Dorsolateral prefrontal cortex (tissue), 120 donors: ENCODE measurements at regions of chr20 and their contacts with region 1.

Region 1: GRCh38 chr20:25146374-25146773 is 49.1 kb upstream of the ENTPD6 start:
- DNase-seq: no peak
- H3K4me3 ChIP-seq: no peak overlapping the region
- H3K27ac ChIP-seq: no peak overlapping the region
- H3K27me3 ChIP-seq: peaks cover 0 to 21% (median 0%) of the 10 kb centered on the region in 45 donors
- CTCF ChIP-seq: no peak

Region 2: DNA sequence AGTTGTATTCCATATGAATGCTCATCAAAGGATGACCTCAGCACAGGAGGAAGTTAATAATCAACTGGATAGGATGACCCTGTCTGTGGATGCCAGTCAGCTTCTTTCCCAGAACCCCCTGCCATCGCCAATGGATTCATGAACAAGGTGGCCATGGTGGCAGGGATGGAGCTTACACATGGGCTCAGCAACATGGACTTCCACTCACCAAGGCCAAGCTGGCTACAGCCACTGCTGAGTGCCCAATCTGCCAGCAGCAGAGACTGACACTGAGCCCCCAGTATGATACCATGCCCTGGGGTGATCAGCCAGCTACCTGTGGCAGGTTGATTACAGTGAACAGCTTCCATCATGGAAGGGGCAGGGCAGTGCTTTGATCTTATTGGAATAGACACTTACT is 19.7 kb before region 1 on chr20:
- intact Hi-C with region 1: loop called in 1 of 2 experiments (anchors 2 kb)
- DNase-seq: no peak
- H3K4me3 ChIP-seq: no peak overlapping the region
- H3K27ac ChIP-seq: no peak overlapping the region
- H3K27me3 ChIP-seq: no peaks in the 10 kb centered on the region
- CTCF ChIP-seq: no peak